Stomach (tissue), 19 donors: ENCODE measurements at regions of chr9 and their contacts with region 1.

Region 1: DNA sequence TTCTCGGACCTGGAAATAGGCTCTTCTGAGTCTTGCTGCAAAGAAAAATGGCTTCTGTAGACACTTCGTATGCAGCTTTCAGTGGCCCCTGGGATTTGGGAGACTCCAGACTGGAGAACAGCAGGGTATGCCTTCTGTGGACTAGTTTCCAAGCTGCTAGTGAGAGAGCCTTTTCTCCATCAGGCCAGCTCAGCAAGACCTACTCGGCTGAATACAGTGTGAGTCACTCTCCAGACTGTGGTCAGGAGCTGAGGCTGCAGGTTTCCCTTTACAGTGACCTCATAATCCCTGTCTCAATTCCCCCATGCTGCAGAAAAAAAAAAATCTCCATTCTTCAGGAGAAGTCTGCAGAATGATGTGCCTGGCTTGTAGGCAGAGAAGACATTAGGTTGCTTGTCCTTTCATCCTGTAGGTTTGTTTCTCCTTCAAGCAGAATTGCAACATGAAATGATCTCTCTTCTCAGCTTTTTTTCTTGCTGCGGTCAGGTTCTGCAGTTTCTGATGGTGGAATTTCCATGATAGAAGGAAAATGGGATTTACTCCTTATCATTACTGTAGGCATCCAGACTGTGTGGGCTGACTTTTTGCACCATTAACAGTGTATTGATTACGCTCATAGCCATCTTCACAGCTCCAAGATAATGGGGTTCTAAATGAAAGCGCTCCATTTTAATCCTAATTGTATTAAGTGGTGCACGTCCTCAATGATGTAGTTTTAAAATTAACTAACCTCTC is 78.3 kb upstream of the TNFSF8 start:
- DNase-seq: no peak
- H3K4me3 ChIP-seq: no peak overlapping the region
- H3K27ac ChIP-seq: no peak overlapping the region
- H3K4me1 ChIP-seq: no peaks in the 10 kb centered on the region
- H3K27me3 ChIP-seq: no peaks in the 10 kb centered on the region
- CTCF ChIP-seq: no peak
- EP300 ChIP-seq: no peak
- POLR2A ChIP-seq: no peak

Region 2: GRCh38 chr9:114911167-114911821 is 97.4 kb before region 1 on chr9:
- intact Hi-C with region 1: loop called (anchors 10 kb)
- DNase-seq: peak in 1 of 2 donors; percentile 77
- H3K4me3 ChIP-seq: no peak overlapping the region
- H3K27ac ChIP-seq: no peak overlapping the region
- H3K4me1 ChIP-seq: peaks cover 0 to 17% (median 3%) of the 10 kb centered on the region in 4 donors
- H3K27me3 ChIP-seq: no peaks in the 10 kb centered on the region
- CTCF ChIP-seq: peak in 5 of 7 experiments; percentile 33 to 76 (median 61)
- EP300 ChIP-seq: no peak
- POLR2A ChIP-seq: no peak

Region 3: DNA sequence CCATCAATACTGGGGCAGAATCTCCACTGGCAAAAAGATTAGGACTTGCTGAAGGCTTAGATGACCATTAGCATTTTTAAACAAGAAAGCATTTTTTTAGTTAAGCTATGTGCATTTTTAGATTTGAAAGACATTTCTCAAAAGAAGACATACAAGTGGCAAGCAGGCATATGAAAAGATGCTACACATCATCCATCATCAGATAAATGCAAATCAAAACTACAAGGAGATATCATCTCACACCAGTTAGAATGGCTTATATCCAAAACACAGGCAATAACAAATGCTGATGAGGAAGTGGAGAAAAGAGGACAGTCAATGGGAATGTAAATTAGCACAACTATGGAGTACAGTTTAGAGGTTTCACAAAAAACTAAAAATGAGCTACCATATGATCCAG is 304.8 kb after region 1 on chr9:
- intact Hi-C with region 1: no loop called
- DNase-seq: no peak
- H3K4me3 ChIP-seq: no peak overlapping the region
- H3K27ac ChIP-seq: no peak overlapping the region
- H3K4me1 ChIP-seq: no peaks in the 10 kb centered on the region
- H3K27me3 ChIP-seq: no peaks in the 10 kb centered on the region
- CTCF ChIP-seq: no peak
- EP300 ChIP-seq: no peak
- POLR2A ChIP-seq: no peak